ENCODE measurements at regions of chr21 and their contacts with region 1.

Region 1: DNA sequence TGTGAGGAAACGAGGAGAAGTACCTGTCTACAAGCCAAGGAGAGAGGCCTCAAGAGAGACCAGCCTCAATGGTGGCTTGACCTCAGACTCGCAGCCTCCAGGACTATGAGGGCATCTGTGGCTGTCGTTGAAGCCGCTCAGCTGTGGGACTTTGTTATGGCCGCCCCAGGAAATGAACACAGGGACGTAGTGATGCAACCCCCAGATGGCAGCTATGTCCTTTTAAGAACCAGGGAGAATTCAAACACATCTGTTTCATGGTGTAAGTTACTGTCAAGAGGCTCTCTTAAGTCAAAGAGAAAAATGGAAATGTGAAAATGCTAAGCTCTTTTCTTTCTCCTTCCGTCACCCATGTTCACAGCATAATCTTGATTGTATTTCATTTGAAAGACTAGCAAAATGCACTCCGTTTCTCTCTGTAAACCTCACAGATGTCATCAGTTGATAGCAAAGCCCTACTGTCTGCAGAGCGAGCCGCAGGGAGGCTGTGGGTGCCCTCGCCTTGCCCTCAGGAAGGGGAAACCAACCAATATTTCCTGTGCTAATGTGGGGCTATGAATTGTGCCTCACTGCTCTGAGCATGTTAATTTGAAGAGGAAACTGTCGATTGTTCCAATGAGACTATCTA is 21.3 kb downstream of the UBASH3A start:
- DNase-seq: peak; percentile 93
- H3K4me3 Mint-ChIP-seq: peak overlapping the region; percentile 79
- H3K27ac Mint-ChIP-seq: peak overlapping the region; percentile 92
- H3K4me1 Mint-ChIP-seq: peaks cover 64% of the 10 kb centered on the region
- H3K27me3 Mint-ChIP-seq: no peaks in the 10 kb centered on the region

Region 2: GRCh38 chr21:42392721-42393442 is 32.1 kb before region 1 on chr21:
- intact Hi-C with region 1: loop called (anchors 5 kb)
- DNase-seq: peak; percentile 75
- H3K4me3 Mint-ChIP-seq: peak overlapping the region; percentile 71
- H3K27ac Mint-ChIP-seq: peak overlapping the region; percentile 82
- H3K4me1 Mint-ChIP-seq: peaks cover 70% of the 10 kb centered on the region
- H3K27me3 Mint-ChIP-seq: no peaks in the 10 kb centered on the region

Region 3: GRCh38 chr21:42406201-42406621 is 18.8 kb before region 1 on chr21:
- intact Hi-C with region 1: loop called (anchors 1 kb)
- DNase-seq: peak; percentile 91
- H3K4me3 Mint-ChIP-seq: peak overlapping the region; percentile 93
- H3K27ac Mint-ChIP-seq: peak overlapping the region; percentile 88
- H3K4me1 Mint-ChIP-seq: peaks cover 49% of the 10 kb centered on the region
- H3K27me3 Mint-ChIP-seq: no peaks in the 10 kb centered on the region

Region 4: DNA sequence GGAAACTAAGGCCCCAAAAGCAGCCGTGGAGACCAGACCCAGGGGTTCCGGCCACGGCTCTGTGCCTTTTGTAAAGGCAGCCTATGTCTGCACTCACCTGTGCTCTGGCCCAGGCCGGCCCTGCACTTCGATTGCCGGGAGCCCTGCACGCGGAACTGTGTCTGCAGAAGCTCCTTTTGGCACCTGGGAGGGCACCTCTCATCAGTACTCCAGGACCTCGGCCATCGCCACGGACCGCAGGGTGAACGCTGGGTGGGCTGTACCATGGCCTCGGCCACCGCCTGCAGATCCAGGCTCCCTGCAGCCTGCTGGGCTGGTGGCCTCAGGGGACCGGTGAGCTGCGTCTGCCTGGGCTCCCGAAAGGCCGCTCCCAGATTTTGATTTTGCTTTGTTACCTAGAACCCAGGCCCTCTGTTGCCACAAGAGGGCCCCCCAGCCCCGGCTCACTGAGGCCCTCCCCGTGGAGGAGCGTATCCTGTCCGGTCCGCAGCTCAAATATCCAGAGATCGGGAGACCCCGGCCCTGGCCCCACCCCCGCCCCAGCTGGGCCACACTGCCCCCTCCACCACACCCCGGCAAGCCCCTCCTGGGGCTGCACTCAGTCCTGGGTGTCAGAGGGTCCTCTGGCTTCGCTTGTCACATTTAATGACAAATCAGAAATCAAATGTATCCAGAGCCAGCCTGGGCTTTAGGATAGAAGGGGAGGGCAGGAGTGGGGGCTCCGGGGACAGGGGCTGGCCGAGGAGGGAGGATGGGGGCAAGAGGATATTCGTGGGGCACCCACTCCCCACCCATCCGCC is 168.2 kb after region 1 on chr21:
- intact Hi-C with region 1: no loop called
- DNase-seq: peak; percentile 90
- H3K4me3 Mint-ChIP-seq: no peak overlapping the region
- H3K27ac Mint-ChIP-seq: no peak overlapping the region
- H3K4me1 Mint-ChIP-seq: peaks cover 15% of the 10 kb centered on the region
- H3K27me3 Mint-ChIP-seq: peaks cover 2% of the 10 kb centered on the region

Measured in activated CD4-positive, alpha-beta T cell treated with anti-CD3 and anti-CD28 coated beads, Interleukin-2, amount 10 ng/mL, durations not matched to agents 24 days and 14 days (primary cell).